ENCODE measurements at regions of chr7 and their contacts with region 1.

Region 1: DNA sequence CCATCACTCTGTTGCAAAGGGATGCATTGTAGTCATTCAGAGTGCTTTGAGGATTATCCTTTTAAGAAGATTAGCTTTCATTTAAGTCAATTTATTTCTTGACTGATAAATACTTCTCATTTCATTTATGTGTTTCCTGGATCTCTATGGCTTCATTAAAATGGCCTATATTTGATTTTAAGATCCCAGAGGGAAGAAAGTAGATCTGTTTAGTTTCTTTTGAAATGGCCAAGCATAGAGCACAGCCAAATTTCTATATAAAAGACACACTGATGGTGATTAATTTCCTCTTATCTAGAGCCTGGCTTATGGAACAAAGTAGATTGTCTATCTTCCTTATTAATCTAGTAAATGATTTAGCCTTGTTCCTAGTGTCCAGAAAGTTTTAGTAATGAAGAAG is 129.7 kb upstream of the CALCR start:
- DNase-seq: no peak
- ATAC-seq: no peak
- H3K4me3 ChIP-seq: no peak overlapping the region
- H3K27ac ChIP-seq: no peak overlapping the region
- H3K4me1 ChIP-seq: no peaks in the 10 kb centered on the region
- H3K27me3 ChIP-seq: peaks cover 37% of the 10 kb centered on the region
- CTCF ChIP-seq: no peak

Region 2: DNA sequence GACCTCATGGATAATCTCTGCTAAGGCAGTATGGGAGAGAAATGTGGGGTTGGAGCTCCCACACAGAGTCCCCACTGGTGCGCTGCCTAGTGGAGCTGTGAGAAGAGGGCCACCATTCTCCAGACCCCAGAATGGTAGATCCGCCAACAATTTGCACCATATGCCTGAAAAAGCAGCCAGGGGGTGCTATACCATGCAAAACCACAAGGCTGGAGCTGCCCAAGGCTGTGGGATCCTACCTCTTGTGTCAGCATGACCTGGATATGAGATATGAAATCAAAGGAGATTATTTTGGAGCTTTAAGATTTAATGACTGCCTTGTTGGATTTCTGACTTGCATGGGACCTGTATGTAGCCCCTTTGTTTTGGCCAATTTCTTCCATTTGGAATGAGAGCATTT is 529.0 kb before region 1 on chr7:
- CTCF ChIA-PET with region 1: no interaction called
- POLR2A ChIA-PET with region 1: no interaction called
- intact Hi-C with region 1: no loop called
- DNase-seq: no peak
- ATAC-seq: no peak
- H3K4me3 ChIP-seq: no peak overlapping the region
- H3K27ac ChIP-seq: no peak overlapping the region
- H3K4me1 ChIP-seq: no peaks in the 10 kb centered on the region
- H3K27me3 ChIP-seq: no peaks in the 10 kb centered on the region
- CTCF ChIP-seq: 0 out of 2 replicates have a peak, but pooled peaks have one; percentile 13

Region 3: GRCh38 chr7:93693796-93694195 is 10.4 kb before region 1 on chr7:
- CTCF ChIA-PET with region 1: no interaction called
- POLR2A ChIA-PET with region 1: no interaction called
- intact Hi-C with region 1: loop called (anchors 1 kb)
- DNase-seq: no peak
- ATAC-seq: no peak
- H3K4me3 ChIP-seq: no peak overlapping the region
- H3K27ac ChIP-seq: no peak overlapping the region
- H3K4me1 ChIP-seq: no peaks in the 10 kb centered on the region
- H3K27me3 ChIP-seq: peaks cover 71% of the 10 kb centered on the region
- CTCF ChIP-seq: no peak